IMR-90 (cell line): ENCODE measurements at regions of chr6 and their contacts with region 1.

Region 1: GRCh38 chr6:4775584-4776494 is at the start of gene CDYL:
- DNase-seq: peak; percentile 85
- ATAC-seq: peak; percentile 89
- H3K4me3 ChIP-seq: peak within 1 kb of the TSS; percentile 93
- H3K27ac ChIP-seq: peak within 1 kb of the TSS; percentile 76
- H3K4me1 ChIP-seq: no peaks in the 10 kb centered on the region; the same call in 1 of the 2 replicates
- H3K27me3 ChIP-seq: peaks cover 3% of the 10 kb centered on the region
- CTCF ChIP-seq: peak; percentile 18; the same call in 1 of the 2 replicates
- POLR2A ChIP-seq: no peak
- RAD21 ChIP-seq: peak; percentile 23; the same call in 1 of the 2 replicates
- total RNA-seq, gene CDYL: 72.2 and 92.1 TPM in 2 replicates

Region 2: DNA sequence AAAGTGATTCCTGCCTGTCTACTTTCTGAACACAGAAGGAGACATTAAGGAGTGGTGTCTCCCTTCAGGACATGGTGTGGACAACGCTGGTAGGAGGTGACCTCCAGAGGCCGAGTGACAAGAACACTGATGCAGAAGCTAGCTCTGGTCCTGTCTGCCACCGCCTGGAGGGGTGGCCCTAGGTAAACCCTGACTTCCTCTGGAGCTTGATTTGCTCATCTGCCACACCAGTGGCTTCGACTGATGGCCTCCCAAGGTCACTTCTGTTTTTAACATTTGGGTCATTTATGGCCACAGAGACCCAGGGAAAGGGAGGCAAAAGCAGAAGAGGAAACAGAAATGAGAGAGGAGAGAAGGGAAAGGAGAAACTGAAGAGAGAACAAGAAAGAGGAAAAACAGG is 1269.6 kb before region 1 on chr6:
- CTCF ChIA-PET with region 1: no interaction called
- POLR2A ChIA-PET with region 1: no interaction called
- dilution Hi-C with region 1: no loop called
- in situ Hi-C with region 1: no loop called
- intact Hi-C with region 1: no loop called
- DNase-seq: no peak
- ATAC-seq: no peak
- H3K4me3 ChIP-seq: no peak overlapping the region
- H3K27ac ChIP-seq: no peak overlapping the region
- H3K4me1 ChIP-seq: peaks cover 5% of the 10 kb centered on the region; the same call in 1 of the 2 replicates
- H3K27me3 ChIP-seq: peaks cover 32% of the 10 kb centered on the region
- CTCF ChIP-seq: no peak
- POLR2A ChIP-seq: no peak
- RAD21 ChIP-seq: no peak

Region 3: DNA sequence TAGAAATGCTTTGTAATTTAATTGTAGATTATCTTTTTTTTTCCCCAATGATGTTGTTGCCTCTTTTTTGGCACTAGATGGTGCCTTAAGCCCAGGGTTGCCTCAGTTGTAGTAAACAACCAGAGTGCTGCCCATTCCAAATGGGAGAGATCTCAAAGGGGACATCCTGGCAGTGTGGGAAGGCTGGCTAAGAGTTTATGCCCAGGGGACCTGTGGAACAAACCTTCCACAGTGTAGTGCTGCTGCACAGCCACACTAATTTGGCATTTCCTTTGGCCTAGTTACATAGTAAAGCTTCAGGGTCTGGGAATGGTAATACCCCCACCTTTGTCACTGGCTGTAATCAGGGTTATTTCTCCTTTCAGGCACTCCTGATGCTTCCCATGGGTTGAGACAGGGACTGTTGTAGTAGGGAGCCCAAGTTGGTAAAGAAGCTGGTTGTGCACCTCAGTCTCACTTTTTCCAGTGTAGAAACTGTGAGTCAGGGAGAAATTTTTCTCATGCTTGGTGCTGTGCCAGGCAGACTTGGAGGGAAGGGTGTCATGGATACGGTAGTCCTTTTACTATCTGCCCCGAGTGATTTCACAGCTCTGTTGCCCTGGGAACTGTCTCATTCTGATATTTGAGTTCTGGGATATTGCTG is 462.7 kb before region 1 on chr6:
- CTCF ChIA-PET with region 1: no interaction called
- POLR2A ChIA-PET with region 1: no interaction called
- dilution Hi-C with region 1: no loop called
- in situ Hi-C with region 1: no loop called
- intact Hi-C with region 1: loop called (anchors 2 kb)
- DNase-seq: peak; percentile 92
- ATAC-seq: peak; percentile 76
- H3K4me3 ChIP-seq: peak overlapping the region; percentile 1; the same call in 1 of the 2 replicates
- H3K27ac ChIP-seq: peak overlapping the region; percentile 46
- H3K4me1 ChIP-seq: peaks cover 12% of the 10 kb centered on the region
- H3K27me3 ChIP-seq: no peaks in the 10 kb centered on the region
- CTCF ChIP-seq: peak; percentile 88
- POLR2A ChIP-seq: peak; percentile 50; the same call in 1 of the 2 replicates
- RAD21 ChIP-seq: peak; percentile 99

Region 4: DNA sequence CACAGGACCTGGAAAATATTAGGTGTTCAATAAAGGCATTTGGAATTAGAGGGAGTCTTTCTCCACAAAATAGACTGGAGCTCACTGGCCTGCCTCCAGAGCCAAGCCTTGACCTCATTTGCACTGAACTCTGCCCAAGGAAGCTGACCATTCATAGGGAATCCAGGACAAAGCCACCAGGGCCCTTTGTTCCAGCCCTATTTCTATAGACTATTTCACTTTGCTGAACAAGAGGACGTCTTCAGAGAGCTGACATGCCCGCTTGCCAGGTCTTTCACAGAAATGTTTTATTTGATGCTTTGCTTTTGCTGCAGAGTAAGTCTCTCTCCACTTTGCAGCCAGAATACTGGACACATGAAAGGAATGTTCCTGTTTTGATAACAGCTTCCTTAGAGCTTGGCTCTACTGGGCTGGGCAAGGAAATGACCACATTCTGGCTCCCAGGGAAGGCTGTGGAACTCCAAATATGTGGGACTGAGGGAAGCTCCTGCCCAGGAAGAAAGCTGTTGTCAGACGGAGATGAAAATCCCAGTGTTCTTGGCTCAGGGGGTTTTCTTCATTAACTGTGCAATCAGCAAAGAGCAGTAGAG is 193.9 kb before region 1 on chr6:
- CTCF ChIA-PET with region 1: no interaction called
- POLR2A ChIA-PET with region 1: no interaction called
- dilution Hi-C with region 1: no loop called
- in situ Hi-C with region 1: no loop called
- intact Hi-C with region 1: loop called (anchors 5 kb)
- DNase-seq: peak; percentile 95
- ATAC-seq: peak; percentile 90
- H3K4me3 ChIP-seq: no peak overlapping the region
- H3K27ac ChIP-seq: peak overlapping the region; percentile 87
- H3K4me1 ChIP-seq: peaks cover 19% of the 10 kb centered on the region
- H3K27me3 ChIP-seq: no peaks in the 10 kb centered on the region
- CTCF ChIP-seq: no peak
- POLR2A ChIP-seq: no peak
- RAD21 ChIP-seq: peak; percentile 1; the same call in 1 of the 2 replicates

Region 5: GRCh38 chr6:4732691-4733315 is 43.0 kb before region 1 on chr6:
- CTCF ChIA-PET with region 1: no interaction called
- POLR2A ChIA-PET with region 1: no interaction called
- dilution Hi-C with region 1: no loop called
- in situ Hi-C with region 1: no loop called
- intact Hi-C with region 1: loop called (anchors 5 kb)
- DNase-seq: peak; percentile 95
- ATAC-seq: peak; percentile 96
- H3K4me3 ChIP-seq: peak overlapping the region; percentile 18
- H3K27ac ChIP-seq: peak overlapping the region; percentile 63; the same call in 1 of the 2 replicates
- H3K4me1 ChIP-seq: peaks cover 7% of the 10 kb centered on the region; the same call in 1 of the 2 replicates
- H3K27me3 ChIP-seq: no peaks in the 10 kb centered on the region; the same call in 1 of the 2 replicates
- CTCF ChIP-seq: no peak
- POLR2A ChIP-seq: no peak
- RAD21 ChIP-seq: peak; percentile 43

Region 6: DNA sequence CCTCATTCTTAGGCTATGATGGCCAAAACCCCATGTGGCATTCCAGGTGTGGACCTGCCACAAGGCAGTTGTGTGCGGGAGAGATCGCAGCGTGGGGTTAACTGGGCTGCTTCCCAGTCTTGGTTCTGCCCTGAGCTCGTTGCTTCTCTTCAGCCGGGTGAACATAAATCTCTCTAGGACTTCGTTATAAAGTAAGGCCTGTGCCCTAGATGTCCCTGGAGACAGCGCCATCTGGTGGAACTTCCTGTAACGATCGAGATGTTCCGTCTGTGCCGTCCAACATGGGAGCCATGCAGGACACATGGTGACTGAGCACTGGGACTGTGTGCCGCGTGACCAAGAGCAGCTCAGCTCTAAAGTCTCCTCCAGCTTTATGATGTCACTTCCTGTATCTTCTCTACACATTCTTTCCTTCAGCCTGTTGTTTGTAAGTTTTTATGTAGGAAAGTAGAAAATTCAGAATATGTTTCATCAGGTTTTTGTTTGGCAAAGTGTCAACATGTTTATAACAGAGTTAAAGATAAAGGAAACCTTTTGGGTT is 254.8 kb after region 1 on chr6:
- CTCF ChIA-PET with region 1: no interaction called
- POLR2A ChIA-PET with region 1: no interaction called
- dilution Hi-C with region 1: no loop called
- in situ Hi-C with region 1: no loop called
- intact Hi-C with region 1: loop called (anchors 1 kb)
- DNase-seq: peak; percentile 78
- ATAC-seq: peak; percentile 48
- H3K4me3 ChIP-seq: no peak overlapping the region
- H3K27ac ChIP-seq: no peak overlapping the region
- H3K4me1 ChIP-seq: peaks cover 6% of the 10 kb centered on the region; the same call in 1 of the 2 replicates
- H3K27me3 ChIP-seq: no peaks in the 10 kb centered on the region
- CTCF ChIP-seq: peak; percentile 66
- POLR2A ChIP-seq: no peak
- RAD21 ChIP-seq: peak; percentile 73